Activated T-helper 2 cell treated with anti-CD3 and anti-CD28 coated beads, Interferon-gamma antibody, Interleukin-2, Interleukin-4, amounts not matched to agents 10 μg/mL and 5 μg/mL and 100 μg/mL, durations not matched to agents 14 hours and 24 hours and 36 hours (primary cell): ENCODE measurements at regions of chr13 and their contacts with region 1.

Region 1: GRCh38 chr13:23466144-23467002 is 32.9 kb upstream of the SACS start:
- DNase-seq: peak; percentile 36
- H3K4me3 Mint-ChIP-seq: peak overlapping the region; percentile 60
- H3K27ac Mint-ChIP-seq: no peak overlapping the region
- H3K4me1 Mint-ChIP-seq: peaks cover 17% of the 10 kb centered on the region
- H3K27me3 Mint-ChIP-seq: peaks cover 41% of the 10 kb centered on the region

Region 2: DNA sequence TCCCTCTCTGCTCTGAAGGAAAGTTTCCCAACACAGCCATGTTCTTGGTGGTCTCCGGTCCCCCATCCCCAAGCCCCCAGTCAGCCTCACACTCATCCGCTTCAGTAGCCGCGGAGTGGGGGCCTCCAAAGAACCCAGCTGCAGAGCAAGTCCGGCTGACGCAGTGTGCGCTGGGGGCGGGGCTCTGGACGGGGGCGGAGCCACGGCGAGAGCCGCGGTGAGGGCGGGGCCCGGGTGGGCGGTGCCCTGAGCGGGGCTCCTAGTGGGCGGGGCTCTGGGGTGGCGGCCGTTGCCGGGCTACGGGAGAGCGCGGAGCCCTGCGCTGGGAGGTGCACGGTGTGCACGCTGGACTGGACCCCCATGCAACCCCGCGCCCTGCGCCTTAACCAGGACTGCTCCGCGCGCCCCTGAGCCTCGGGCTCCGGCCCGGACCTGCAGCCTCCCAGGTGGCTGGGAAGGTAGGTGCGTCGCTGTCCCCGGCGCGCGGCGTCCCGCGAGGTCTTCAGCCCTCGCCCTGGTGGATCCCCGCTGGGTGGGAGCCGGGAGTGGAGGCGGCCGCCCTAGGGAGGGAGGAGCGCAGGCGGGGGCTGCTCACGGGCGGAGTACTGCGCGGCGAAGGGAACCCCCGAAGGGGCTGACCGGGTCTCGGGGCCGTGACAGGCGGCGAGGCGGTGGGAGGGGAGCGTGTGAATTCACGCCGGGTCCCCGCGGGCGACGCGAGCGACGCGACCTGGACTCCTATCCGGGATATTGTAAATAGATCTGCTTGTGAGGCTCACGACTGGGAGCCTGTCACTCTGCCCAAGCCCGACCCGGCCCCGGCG is 112.9 kb after region 1 on chr13:
- intact Hi-C with region 1: loop called (anchors 5 kb)
- DNase-seq: peak; percentile 88
- H3K4me3 Mint-ChIP-seq: peak overlapping the region; percentile 70
- H3K27ac Mint-ChIP-seq: no peak overlapping the region
- H3K4me1 Mint-ChIP-seq: peaks cover 15% of the 10 kb centered on the region
- H3K27me3 Mint-ChIP-seq: peaks cover 66% of the 10 kb centered on the region

Region 3: GRCh38 chr13:23707674-23708073 is 241.3 kb after region 1 on chr13:
- intact Hi-C with region 1: loop called (anchors 10 kb)
- DNase-seq: no peak
- H3K4me3 Mint-ChIP-seq: no peak overlapping the region
- H3K27ac Mint-ChIP-seq: no peak overlapping the region
- H3K4me1 Mint-ChIP-seq: no peaks in the 10 kb centered on the region
- H3K27me3 Mint-ChIP-seq: peaks cover 4% of the 10 kb centered on the region

Region 4: GRCh38 chr13:23741879-23742510 is 275.6 kb after region 1 on chr13:
- intact Hi-C with region 1: loop called (anchors 10 kb)
- DNase-seq: no peak
- H3K4me3 Mint-ChIP-seq: no peak overlapping the region
- H3K27ac Mint-ChIP-seq: no peak overlapping the region
- H3K4me1 Mint-ChIP-seq: peaks cover 41% of the 10 kb centered on the region
- H3K27me3 Mint-ChIP-seq: peaks cover 17% of the 10 kb centered on the region

Region 5: GRCh38 chr13:23871616-23872220 is 405.3 kb after region 1 on chr13:
- intact Hi-C with region 1: loop called (anchors 1 kb)
- DNase-seq: no peak
- H3K4me3 Mint-ChIP-seq: no peak overlapping the region
- H3K27ac Mint-ChIP-seq: no peak overlapping the region
- H3K4me1 Mint-ChIP-seq: no peaks in the 10 kb centered on the region
- H3K27me3 Mint-ChIP-seq: no peaks in the 10 kb centered on the region

Region 6: DNA sequence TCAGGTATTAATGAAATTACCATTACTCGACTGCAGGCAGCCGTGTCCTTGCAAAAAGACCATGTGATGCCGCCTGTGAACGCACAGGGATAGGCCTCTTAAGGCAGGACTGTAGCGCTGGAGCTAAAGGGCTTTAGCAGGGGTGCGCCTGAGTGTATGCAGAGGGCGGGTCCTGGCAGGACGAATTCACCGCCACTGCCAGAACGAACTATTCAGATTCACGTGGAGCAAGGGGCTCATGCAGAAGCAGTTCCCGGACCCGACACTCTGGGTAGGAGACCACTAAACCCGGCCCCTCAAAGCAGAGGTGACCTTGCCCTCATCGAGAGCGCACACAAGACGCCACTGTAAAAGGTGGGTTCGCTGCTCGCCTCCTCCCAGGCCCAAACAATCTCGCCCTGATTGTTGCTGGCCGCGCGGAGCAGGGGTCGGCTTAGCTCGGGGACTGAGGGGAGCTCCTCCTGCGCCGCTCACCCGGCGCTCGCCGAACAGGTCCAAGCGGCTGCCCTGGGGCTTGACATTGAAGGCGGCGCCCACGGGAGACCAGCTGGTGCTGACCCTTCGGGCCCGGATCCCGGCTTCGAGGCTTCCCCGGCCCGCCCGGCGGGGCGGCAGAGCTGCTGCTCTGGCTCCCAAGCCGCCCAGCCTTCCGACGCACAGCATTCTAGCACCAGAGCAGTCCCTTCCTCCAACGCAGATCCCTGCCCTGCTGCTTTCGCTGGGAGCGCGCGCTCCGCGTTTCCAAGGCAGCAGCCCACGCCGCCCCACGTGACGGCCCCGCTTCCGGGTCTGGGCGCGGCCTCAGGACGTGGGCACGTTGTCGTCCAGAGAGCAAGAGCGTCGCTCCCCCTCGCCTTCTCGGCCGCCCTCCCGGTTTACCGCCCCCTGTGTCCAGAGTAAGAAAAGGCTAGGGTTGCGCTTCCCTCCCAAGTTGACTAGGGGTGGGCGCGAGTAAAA is 422.6 kb after region 1 on chr13 and contains the start of gene MIPEP:
- intact Hi-C with region 1: loop called (anchors 5 kb)
- DNase-seq: peak; percentile 85
- H3K4me3 Mint-ChIP-seq: peak within 1 kb of the TSS; percentile 88
- H3K27ac Mint-ChIP-seq: peak within 1 kb of the TSS; percentile 69
- H3K4me1 Mint-ChIP-seq: peaks cover 13% of the 10 kb centered on the region
- H3K27me3 Mint-ChIP-seq: no peaks in the 10 kb centered on the region
- total RNA-seq, gene MIPEP: 9.9 TPM in 2 replicates

Region 7: DNA sequence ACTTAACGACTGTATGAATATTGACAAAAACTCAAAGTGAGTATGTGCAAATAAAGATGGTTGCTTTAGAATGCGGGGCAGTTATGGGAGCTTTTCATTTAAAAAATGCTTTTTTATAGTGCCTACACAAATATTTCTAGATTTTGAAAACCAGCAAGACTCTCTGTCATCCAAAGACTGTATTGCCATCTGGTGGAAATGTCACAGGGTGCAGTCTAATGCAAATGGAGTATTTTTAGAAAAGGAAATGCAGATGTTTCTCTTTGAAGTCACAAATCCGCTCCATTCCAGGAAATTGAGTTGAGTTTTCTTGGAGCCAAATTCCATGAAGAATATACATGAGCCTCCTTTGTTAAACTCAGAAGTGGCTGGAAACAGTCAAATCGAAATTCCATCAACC is 433.2 kb after region 1 on chr13:
- intact Hi-C with region 1: loop called (anchors 1 kb)
- DNase-seq: no peak
- H3K4me3 Mint-ChIP-seq: no peak overlapping the region
- H3K27ac Mint-ChIP-seq: no peak overlapping the region
- H3K4me1 Mint-ChIP-seq: peaks cover 3% of the 10 kb centered on the region
- H3K27me3 Mint-ChIP-seq: peaks cover 33% of the 10 kb centered on the region